Activated CD4-positive, alpha-beta T cell treated with anti-CD3 and anti-CD28 coated beads for 36 hours (primary cell): ENCODE measurements at regions of chr10 and their contacts with region 1.

Region 1: GRCh38 chr10:95133016-95133752 is 60.9 kb upstream of the ACSM6 start:
- DNase-seq: peak; percentile 90
- ATAC-seq: peak; percentile 87
- H3K4me3 Mint-ChIP-seq: no peak overlapping the region
- H3K27ac Mint-ChIP-seq: no peak overlapping the region
- H3K4me1 Mint-ChIP-seq: no peaks in the 10 kb centered on the region
- H3K27me3 Mint-ChIP-seq: no peaks in the 10 kb centered on the region

Region 2: GRCh38 chr10:94630017-94630688 is 503.0 kb before region 1 on chr10:
- CTCF ChIA-PET with region 1: no interaction called
- POLR2A ChIA-PET with region 1: no interaction called
- intact Hi-C with region 1: loop called in 1 of 2 experiments (anchors 5 kb)
- DNase-seq: no peak
- ATAC-seq: no peak
- H3K4me3 Mint-ChIP-seq: no peak overlapping the region
- H3K27ac Mint-ChIP-seq: no peak overlapping the region
- H3K4me1 Mint-ChIP-seq: no peaks in the 10 kb centered on the region
- H3K27me3 Mint-ChIP-seq: peaks cover 6% of the 10 kb centered on the region

Region 3: DNA sequence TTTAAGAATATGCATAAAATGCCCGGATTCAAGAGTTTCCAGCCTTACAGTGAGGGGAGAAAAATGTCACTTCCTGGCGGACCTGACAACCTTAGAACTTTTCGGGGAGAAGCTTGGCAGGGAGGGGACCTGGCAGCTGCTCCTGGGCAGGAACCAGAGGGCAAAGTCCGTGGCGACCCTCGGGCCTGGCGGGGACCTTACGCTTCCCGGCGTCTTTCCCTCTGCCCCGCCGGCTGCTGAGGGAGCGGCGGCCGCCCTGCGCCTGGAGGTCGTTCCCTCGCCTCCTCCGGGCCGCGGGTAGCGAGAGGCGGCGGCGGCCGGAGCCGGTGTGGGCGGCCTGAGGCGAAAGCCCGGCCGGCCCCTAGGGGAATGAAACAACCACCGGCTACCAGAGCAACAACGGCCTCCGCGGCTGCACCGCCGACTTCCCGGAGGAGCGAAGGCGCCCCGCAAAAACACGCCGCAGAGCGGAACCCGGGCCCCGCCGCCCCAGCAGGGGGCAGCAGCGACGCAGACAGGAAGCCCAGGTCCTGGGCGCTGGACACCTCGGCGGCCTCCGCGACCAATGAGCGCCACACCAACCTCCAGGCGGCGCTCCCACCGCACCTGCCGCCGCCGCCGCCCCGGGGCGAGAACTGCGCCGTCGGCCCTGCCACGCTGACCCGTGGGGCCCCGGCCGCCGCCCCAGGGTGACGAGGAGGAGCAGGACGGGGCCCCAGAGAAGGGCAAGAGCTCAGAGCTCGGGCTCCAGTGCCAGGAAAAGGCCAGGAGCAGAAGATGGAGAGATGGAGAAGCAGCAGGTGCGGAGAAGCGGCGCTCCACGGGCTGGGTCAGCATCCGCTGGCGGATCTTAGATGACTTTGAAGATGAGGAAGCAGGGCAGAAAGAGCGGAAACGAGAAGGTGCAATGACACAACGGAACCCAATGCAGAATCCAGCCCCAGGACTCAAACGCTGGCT is 50.4 kb after region 1 on chr10:
- CTCF ChIA-PET with region 1: interaction called, 3 read pairs
- POLR2A ChIA-PET with region 1: no interaction called
- intact Hi-C with region 1: loop called (anchors 2 to 10 kb)
- DNase-seq: peak; percentile 88
- ATAC-seq: peak; percentile 96
- H3K4me3 Mint-ChIP-seq: peak overlapping the region; percentile 62
- H3K27ac Mint-ChIP-seq: no peak overlapping the region
- H3K4me1 Mint-ChIP-seq: peaks cover 3% of the 10 kb centered on the region
- H3K27me3 Mint-ChIP-seq: peaks cover 18% of the 10 kb centered on the region

Region 4: DNA sequence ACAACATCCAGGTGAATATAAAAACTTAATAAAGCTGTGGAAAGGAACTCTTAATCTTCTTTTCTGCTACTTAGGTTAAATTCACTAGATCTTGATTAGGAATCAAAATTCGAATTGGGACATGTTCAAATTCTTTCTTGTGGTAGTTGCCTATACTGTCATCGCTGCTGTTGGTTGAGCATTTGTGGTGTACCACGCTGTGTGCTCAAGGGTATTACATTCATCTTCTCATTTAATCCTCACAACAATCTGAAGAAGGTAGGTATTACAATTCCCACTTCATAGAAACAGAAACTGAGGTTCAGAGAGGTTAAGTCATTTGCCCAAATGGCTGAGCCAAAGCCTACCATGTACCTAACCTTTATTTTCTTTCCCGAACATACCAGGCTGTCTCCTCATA is 734.7 kb after region 1 on chr10:
- CTCF ChIA-PET with region 1: no interaction called
- POLR2A ChIA-PET with region 1: no interaction called
- intact Hi-C with region 1: no loop called
- DNase-seq: no peak
- ATAC-seq: no peak
- H3K4me3 Mint-ChIP-seq: no peak overlapping the region
- H3K27ac Mint-ChIP-seq: no peak overlapping the region
- H3K4me1 Mint-ChIP-seq: peaks cover 12% of the 10 kb centered on the region
- H3K27me3 Mint-ChIP-seq: no peaks in the 10 kb centered on the region